ENCODE measurements at regions of chr10 and their contacts with region 1.

Region 1: DNA sequence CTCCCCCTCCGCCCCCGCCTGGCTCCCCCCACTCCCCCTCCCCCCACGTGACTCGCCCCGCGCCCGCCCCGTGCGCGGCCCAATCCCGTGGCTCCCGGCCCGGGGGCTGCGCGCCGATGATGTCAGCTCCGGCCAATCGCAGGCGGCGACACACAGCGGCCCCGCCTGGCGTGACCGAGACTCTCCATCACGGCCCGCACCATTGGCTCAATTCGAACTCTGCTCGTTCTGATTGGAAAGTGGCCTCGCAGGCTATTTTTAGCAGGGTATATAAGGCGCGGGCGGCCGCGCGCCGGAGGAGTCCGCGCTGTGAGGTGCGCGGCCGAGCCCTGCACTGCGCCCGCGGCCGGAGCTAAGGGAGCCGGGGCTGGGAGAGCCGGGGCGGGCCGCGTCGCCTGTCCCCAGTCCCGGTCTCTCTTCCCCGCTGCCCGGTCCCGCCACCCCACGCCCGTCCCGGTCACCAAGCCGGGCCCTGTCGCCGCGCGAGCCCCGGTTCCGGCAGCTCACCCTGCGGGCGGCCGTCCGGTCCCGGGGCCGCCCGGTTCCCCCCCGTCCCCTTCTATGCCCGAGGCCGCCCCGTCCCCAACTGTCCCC is 345 bp upstream of the KLF6 start:
- DNase-seq: peak; percentile 98
- H3K4me3 Mint-ChIP-seq: peak overlapping the region; percentile 98
- H3K27ac Mint-ChIP-seq: peak overlapping the region; percentile 100
- H3K4me1 Mint-ChIP-seq: peaks cover 35% of the 10 kb centered on the region
- H3K27me3 Mint-ChIP-seq: peaks cover 14% of the 10 kb centered on the region
- CTCF ChIP-seq: no peak

Region 2: DNA sequence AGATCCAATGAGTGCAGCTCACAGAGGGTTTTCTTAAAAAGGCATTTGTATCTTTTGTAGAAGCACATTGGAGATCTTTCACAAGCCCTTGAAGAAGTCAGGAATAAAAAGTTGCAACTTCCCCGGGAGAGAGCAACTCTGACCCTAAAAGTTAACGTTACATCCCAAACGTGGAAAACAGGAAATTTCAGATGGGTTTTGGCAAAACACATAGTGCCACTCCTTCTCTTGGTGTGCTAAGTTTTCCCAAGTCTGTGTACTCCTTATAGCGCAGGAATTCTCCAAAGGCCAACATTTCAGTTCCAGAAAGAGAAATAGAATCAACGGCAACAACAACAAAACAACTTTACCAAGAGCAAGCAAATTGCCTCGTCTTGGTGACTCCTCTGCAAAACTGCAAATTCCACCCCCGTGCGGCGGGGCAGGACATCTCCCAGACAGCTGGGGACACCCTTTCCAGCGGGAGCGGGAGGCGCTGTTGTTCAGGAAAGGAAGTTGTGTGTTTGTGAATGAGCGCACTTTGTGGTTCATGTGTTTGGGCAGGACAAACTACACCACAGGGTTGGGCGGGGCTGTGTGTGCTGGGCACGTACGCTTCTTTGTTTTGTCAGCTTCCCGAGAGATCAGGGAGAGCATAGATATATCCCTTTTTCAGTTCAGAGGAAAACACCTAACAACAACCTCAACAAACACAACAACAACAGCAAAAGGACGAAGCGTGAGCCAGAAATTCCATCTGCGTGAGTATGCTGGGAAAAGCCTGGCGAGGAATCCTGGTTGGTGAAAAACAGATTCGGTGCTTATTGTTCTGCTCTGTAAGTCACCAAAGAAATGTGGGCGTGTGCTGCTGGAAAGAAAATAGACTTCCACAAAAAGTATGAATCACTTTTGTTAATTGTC is 318.1 kb before region 1 on chr10:
- CTCF ChIA-PET with region 1: no interaction called
- intact Hi-C with region 1: loop called (anchors 2 kb)
- DNase-seq: peak; percentile 83
- H3K4me3 Mint-ChIP-seq: peak overlapping the region; percentile 36
- H3K27ac Mint-ChIP-seq: peak overlapping the region; percentile 86
- H3K4me1 Mint-ChIP-seq: peaks cover 70% of the 10 kb centered on the region
- H3K27me3 Mint-ChIP-seq: no peaks in the 10 kb centered on the region
- CTCF ChIP-seq: peak; percentile 61

Region 3: GRCh38 chr10:3570855-3571266 is 214.5 kb before region 1 on chr10:
- CTCF ChIA-PET with region 1: no interaction called
- intact Hi-C with region 1: no loop called
- DNase-seq: no peak
- H3K4me3 Mint-ChIP-seq: no peak overlapping the region
- H3K27ac Mint-ChIP-seq: no peak overlapping the region
- H3K4me1 Mint-ChIP-seq: no peaks in the 10 kb centered on the region
- H3K27me3 Mint-ChIP-seq: no peaks in the 10 kb centered on the region
- CTCF ChIP-seq: no peak

Region 4: GRCh38 chr10:3774814-3775695 is 10.3 kb before region 1 on chr10:
- CTCF ChIA-PET with region 1: no interaction called
- intact Hi-C with region 1: no loop called
- DNase-seq: peak; percentile 58
- H3K4me3 Mint-ChIP-seq: peak overlapping the region; percentile 61
- H3K27ac Mint-ChIP-seq: peak overlapping the region; percentile 99
- H3K4me1 Mint-ChIP-seq: peaks cover 38% of the 10 kb centered on the region
- H3K27me3 Mint-ChIP-seq: no peaks in the 10 kb centered on the region
- CTCF ChIP-seq: no peak

Region 5: GRCh38 chr10:3805791-3806461 is 20.6 kb after region 1 on chr10:
- CTCF ChIA-PET with region 1: interaction called, 7 read pairs
- intact Hi-C with region 1: loop called (anchors 1 kb)
- DNase-seq: peak; percentile 57
- H3K4me3 Mint-ChIP-seq: peak overlapping the region; percentile 48
- H3K27ac Mint-ChIP-seq: peak overlapping the region; percentile 85
- H3K4me1 Mint-ChIP-seq: peaks cover 54% of the 10 kb centered on the region
- H3K27me3 Mint-ChIP-seq: no peaks in the 10 kb centered on the region
- CTCF ChIP-seq: no peak

Region 6: DNA sequence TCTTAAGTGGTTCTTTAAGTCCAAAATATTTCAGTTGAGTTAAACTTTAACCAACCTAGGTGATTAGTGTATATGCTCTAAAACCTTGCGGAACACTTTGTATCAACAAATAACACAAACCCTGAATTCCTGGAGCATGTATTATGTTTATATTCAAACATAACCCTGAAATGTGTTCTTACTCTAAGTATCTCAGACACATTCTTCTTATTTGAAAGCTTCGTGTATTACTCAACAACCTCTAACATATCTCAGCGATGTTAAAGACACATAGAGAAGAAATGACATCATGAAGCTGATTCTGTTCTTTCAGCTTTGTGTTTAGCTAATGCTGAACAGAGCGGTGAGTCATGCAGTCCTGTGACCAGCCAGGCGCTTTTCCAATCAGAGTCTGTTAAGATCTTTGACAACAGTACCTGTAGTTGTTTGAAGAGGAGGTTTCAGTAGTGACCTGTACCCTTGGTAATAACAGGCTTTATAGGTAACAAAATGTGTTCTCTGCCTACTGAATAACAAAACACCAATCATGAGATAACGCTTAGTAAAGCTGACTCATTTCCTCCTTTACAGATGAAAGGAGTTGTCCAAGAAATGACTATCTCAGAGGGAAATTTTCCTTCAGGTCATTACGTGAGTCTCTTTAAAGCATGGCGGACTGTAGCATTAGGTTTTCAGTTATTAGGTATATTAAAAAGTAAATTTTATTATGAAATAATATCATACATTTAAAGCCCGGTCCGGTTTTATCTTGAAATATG is 67.0 kb after region 1 on chr10:
- CTCF ChIA-PET with region 1: interaction called, 7 read pairs
- intact Hi-C with region 1: loop called (anchors 1 kb)
- DNase-seq: peak; percentile 80
- H3K4me3 Mint-ChIP-seq: peak overlapping the region; percentile 55
- H3K27ac Mint-ChIP-seq: peak overlapping the region; percentile 97
- H3K4me1 Mint-ChIP-seq: peaks cover 46% of the 10 kb centered on the region
- H3K27me3 Mint-ChIP-seq: no peaks in the 10 kb centered on the region
- CTCF ChIP-seq: no peak

Region 7: DNA sequence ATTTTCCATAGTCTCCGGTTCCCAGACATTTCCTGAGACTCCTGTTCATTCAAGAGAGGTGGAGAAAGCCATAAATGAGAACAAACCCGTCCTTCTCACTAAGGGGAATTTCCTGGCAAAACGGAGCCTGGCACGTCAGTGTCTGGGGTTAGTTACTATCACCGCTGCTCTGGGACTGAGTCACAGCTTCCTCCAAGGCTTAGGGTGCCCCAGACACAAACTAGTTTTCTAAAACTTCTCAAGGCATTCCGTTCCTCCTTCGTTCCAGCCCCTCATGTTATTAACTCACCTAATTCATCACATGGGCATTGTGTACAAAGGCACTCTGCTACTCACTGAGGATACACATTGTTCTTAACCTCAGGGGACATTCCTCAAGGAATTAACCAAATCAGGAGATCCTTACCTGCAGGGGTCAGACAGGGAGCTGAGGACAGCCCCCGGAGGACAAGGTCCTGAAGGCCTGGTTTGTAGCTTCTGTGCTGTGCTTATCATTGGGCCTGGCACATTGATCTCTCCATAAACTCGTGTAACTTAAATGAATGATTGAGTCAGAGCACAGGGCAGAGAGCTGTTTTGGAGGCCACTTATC is 102.6 kb after region 1 on chr10:
- CTCF ChIA-PET with region 1: interaction called, 4 read pairs
- intact Hi-C with region 1: loop called (anchors 5 kb)
- DNase-seq: peak; percentile 72
- H3K4me3 Mint-ChIP-seq: peak overlapping the region; percentile 69
- H3K27ac Mint-ChIP-seq: peak overlapping the region; percentile 100
- H3K4me1 Mint-ChIP-seq: peaks cover 78% of the 10 kb centered on the region
- H3K27me3 Mint-ChIP-seq: no peaks in the 10 kb centered on the region
- CTCF ChIP-seq: no peak

Region 8: DNA sequence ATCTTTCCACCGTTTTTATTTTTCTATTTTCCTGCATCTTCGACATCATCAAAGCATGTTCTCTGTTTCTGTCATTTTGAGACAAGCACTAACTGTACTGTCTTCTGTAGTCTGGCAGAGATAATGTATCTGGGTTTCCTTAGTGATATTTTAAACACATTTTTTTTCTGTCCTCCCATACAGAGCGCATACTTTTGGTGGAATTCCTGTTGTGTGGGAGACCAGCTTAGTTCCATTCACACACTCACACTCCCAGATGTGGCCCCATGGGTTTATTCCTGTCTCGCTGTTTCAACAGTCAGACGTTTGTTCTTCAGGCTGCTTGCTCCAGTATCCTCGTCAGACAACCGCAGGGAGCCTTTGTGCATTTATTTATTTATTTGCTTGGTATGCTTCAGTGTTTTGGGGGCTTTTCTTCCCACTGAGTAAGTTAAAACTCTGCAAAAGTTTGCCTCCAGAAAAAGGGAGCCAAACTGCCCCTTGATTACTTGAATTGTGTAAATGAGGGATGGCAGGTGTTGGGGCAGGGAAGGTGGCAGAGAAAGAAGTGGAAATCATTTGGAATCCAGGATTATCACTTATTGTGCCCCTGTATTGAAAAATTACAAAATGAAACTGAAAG is 456.5 kb after region 1 on chr10:
- CTCF ChIA-PET with region 1: no interaction called
- intact Hi-C with region 1: loop called (anchors 2 kb)
- DNase-seq: peak; percentile 29
- H3K4me3 Mint-ChIP-seq: peak overlapping the region; percentile 63
- H3K27ac Mint-ChIP-seq: peak overlapping the region; percentile 85
- H3K4me1 Mint-ChIP-seq: peaks cover 31% of the 10 kb centered on the region
- H3K27me3 Mint-ChIP-seq: no peaks in the 10 kb centered on the region
- CTCF ChIP-seq: no peak

Region 9: DNA sequence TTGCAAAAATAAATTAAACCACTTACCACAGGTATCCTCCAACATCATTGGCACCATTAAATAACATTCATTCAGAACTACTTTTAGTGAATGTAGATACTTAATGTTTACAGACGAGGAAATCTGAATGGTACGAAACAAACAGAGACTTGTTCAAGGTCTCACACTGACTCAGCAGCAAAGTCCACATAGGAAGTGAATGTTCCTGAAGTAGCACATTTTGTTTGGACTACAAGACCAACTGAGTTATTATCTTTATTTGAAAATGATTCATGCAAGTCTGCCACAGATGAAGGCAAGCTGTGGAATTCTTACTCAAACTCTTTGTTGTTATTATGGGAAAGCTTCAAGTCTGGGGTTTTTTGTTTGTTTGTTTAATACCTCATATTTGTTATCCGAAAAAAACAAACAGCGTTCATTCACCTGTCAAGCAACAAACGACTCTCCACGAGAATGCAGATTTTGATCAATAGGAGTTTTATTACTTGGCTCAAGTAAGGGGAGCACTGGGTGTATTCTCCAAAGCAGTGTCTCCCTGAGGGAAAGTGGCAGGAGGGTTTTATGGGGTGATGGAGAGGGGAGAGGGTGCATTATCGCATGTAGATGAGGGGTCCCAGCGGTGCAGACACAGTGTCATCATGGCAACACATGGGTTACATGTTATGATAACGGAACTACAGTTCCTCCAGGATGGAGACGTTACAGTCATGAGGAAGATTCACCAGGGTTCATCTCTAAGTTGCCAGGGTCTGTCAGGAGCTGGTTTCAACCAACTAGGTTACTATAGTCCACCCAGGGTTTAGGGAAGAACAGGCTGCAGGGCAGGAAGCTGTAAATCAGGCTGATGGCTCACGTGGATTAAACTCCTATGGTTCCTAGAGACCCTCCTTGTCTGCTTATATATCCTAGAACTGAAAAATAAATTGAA is 892.9 kb after region 1 on chr10:
- CTCF ChIA-PET with region 1: no interaction called
- intact Hi-C with region 1: loop called (anchors 10 kb)
- DNase-seq: no peak
- H3K4me3 Mint-ChIP-seq: peak overlapping the region; percentile 48
- H3K27ac Mint-ChIP-seq: peak overlapping the region; percentile 96
- H3K4me1 Mint-ChIP-seq: peaks cover 59% of the 10 kb centered on the region
- H3K27me3 Mint-ChIP-seq: no peaks in the 10 kb centered on the region
- CTCF ChIP-seq: no peak

Measured in Calu3 (cell line).